ENCODE measurements at regions of chr7 and their contacts with region 1.

Region 1: GRCh38 chr7:132004536-132005272 is 448.3 kb upstream of the PODXL start:
- DNase-seq: peak; percentile 51
- ATAC-seq: peak; percentile 88

Region 2: GRCh38 chr7:131948434-131949053 is 56.2 kb before region 1 on chr7:
- intact Hi-C with region 1: no loop called
- DNase-seq: peak; percentile 53
- ATAC-seq: peak; percentile 67

Region 3: DNA sequence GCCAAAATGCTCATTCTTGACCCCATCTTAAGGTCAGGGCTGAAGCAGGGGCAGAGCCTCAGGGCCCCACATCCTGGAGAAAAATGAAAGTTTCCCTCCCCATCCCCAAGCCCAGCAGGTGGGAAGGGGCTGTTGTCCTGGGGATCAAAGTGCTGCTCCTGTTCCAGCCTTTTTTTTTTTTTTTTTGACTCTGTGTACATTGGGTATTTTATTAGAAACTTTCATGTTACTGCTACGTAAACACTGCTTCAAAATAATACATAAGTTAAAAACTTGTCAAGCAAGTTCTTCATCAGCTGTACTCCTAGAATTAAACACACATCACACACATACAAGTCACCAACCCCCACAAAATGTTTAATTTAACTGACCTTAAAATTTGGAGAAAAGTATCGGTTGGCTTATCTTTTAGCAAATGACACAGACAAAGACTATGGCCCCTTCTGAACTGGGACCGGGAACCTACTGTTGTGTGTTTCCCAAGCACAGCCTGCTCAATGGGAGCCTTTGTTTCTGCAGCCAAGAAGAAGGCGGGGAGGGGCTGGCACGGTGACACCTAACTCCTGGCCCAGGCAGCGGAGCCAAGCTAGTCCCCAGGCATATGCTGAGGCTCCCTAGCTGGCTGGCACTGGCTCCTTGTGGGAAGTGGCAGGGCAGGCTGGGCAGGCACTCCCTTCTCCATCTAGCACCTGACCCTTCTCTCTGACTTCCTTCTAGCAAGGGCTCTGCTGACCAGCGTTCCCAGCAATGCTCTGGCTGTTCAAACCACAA is 246.4 kb after region 1 on chr7:
- intact Hi-C with region 1: loop called (anchors 10 kb)
- DNase-seq: peak; percentile 89
- ATAC-seq: peak; percentile 91